ENCODE measurements at regions of chr3 and their contacts with region 1.

Region 1: GRCh38 chr3:196198771-196199753 is 12.1 kb downstream of the ZDHHC19 start:
- DNase-seq: peak in 1 of 2 experiments; percentile 31
- ATAC-seq: peak in 1 of 2 experiments; percentile 31; a peak in 3 of 6 replicates
- H3K4me3 ChIP-seq: no peak overlapping the region
- H3K27ac ChIP-seq: no peak overlapping the region
- H3K4me1 ChIP-seq: no peaks in the 10 kb centered on the region
- CTCF ChIP-seq: no peak
- EP300 ChIP-seq: no peak
- POLR2A ChIP-seq: no peak
- RAD21 ChIP-seq: 0 out of 5 replicates have a peak, but pooled peaks of 1 of the 2 experiments have one; percentile 5

Region 2: DNA sequence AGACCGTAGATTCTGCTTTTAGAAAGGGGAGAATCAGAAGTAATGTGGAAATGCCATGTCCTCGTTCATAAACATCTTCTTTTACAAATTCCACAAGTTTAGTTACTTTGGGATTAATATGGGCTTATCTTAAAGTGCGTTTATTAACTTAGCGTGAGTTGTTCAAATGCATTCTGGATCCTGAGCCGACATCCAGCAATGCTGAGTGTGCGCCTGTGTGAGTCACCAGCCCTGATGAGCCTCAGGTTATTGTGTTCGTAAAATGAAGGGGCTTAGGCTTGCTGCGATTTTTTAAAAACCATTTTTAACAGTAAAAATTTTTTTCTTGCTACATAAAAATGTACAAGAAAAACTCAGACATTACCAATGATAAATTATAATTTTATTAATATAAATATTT is 175.1 kb before region 1 on chr3:
- CTCF ChIA-PET with region 1: interaction called, 25 read pairs
- POLR2A ChIA-PET with region 1: no interaction called
- DNase-seq: no peak
- ATAC-seq: no peak
- H3K4me3 ChIP-seq: no peak overlapping the region
- H3K27ac ChIP-seq: no peak overlapping the region
- H3K4me1 ChIP-seq: no peaks in the 10 kb centered on the region
- CTCF ChIP-seq: no peak
- EP300 ChIP-seq: no peak
- POLR2A ChIP-seq: no peak
- RAD21 ChIP-seq: no peak

Region 3: GRCh38 chr3:196073188-196073838 is 125.7 kb before region 1 on chr3:
- CTCF ChIA-PET with region 1: interaction called, 64 read pairs
- POLR2A ChIA-PET with region 1: no interaction called
- DNase-seq: peak; percentile 58 to 64
- ATAC-seq: peak; percentile 98 to 99
- H3K4me3 ChIP-seq: no peak overlapping the region
- H3K27ac ChIP-seq: no peak overlapping the region
- H3K4me1 ChIP-seq: no peaks in the 10 kb centered on the region
- CTCF ChIP-seq: peak; percentile 64
- EP300 ChIP-seq: no peak
- POLR2A ChIP-seq: no peak
- RAD21 ChIP-seq: peak; percentile 62 to 69

Region 4: GRCh38 chr3:196111939-196112386 is 87.1 kb before region 1 on chr3:
- CTCF ChIA-PET with region 1: no interaction called
- POLR2A ChIA-PET with region 1: no interaction called
- DNase-seq: no peak
- ATAC-seq: no peak
- H3K4me3 ChIP-seq: no peak overlapping the region
- H3K27ac ChIP-seq: no peak overlapping the region
- H3K4me1 ChIP-seq: peaks cover 5% of the 10 kb centered on the region; the same call in 1 of the 3 replicates
- CTCF ChIP-seq: no peak
- EP300 ChIP-seq: no peak
- POLR2A ChIP-seq: no peak
- RAD21 ChIP-seq: no peak

Region 5: DNA sequence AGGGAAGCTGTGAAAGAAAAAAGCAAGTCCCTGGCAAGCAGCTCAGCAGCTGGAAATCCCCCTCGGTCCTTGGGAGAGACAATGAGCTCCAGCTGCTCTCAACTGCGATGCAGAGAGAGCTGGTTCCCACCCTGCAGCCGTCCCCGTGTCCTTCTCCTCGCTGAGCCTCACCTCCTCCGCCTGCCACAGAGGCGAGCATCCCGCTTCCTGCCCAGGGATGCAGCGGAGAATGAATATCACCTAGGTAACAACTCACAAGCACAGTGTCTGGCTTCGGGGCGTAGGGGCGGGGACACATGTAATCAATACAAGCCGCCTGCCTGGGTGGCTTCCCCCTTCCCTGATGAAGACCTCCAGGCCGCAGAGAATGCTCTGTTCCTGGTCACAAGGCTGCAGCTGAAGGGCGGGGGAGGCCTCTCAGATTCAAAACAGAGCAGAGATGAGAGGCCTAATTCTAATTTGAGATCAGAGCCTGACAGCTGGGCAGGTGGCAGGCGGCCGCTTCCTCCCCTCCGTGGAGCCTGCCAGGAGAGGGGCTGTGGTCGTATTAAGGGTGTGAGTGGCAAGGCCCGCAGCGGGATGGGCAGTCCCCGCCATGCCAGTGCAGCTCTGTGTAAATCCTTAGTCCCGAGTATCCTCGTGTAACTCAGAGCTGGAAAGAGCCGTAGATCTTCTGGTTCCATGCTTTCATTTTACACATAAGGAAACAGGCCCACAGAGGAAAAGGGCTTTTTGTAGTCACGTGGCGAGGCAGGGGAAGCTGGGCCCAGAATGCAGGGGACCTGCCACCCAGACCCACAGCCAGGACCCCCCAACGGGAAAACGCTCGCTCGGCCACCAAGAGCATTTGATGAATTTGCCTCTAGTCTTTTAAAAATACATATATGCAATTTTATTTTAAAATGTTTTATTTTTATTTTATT is 12.2 kb before region 1 on chr3:
- CTCF ChIA-PET with region 1: interaction called, 21 read pairs
- POLR2A ChIA-PET with region 1: no interaction called
- DNase-seq: no peak
- ATAC-seq: no peak
- H3K4me3 ChIP-seq: no peak overlapping the region
- H3K27ac ChIP-seq: no peak overlapping the region
- H3K4me1 ChIP-seq: no peaks in the 10 kb centered on the region
- CTCF ChIP-seq: no peak
- EP300 ChIP-seq: no peak
- POLR2A ChIP-seq: no peak
- RAD21 ChIP-seq: no peak

Measured in A549 (cell line).